ENCODE measurements at regions of chr1 and their contacts with region 1.

Region 1: GRCh38 chr1:235056937-235057336 is 71.7 kb downstream of the TOMM20 start:
- DNase-seq: no peak
- ATAC-seq: no peak
- H3K4me3 ChIP-seq: no peak overlapping the region
- H3K27ac ChIP-seq: no peak overlapping the region
- H3K4me1 ChIP-seq: peaks cover under 1% of the 10 kb centered on the region
- H3K27me3 ChIP-seq: no peaks in the 10 kb centered on the region
- CTCF ChIP-seq: no peak
- POLR2A ChIP-seq: no peak
- RAD21 ChIP-seq: no peak

Region 2: DNA sequence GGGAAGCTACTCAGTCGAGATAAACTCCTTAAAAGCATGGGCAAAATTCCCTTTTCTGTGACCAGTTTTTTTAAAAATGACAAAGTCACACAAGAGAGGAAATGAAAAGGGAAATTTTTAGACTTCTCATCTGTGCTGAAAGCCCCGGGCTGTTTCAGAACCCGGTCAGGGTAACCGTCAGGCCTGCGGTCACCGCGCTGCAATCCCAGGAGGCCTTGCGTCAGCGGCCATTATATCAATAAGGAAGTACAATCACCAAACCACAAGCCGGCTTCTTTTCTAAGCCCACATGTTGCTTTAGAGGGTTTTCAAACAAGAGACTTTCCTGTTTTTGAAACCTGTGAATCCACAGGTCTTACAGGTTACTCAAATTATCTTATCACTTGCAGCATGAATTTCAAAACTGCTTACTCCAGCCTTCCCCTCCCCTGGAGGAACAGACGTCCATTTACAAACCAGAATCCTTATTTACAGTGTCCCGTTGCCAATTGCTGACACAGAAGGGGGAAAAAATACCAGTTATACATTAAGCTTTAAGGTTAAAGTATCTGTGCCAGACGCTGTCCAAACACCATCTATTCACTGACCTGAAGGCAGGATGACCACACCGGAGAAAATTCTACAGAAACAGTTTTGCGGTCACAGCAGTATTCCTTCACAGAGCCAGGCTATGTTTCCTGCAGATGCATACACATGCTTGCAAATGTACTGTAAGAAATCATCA is 93.6 kb before region 1 on chr1:
- CTCF ChIA-PET with region 1: no interaction called
- POLR2A ChIA-PET with region 1: no interaction called
- dilution Hi-C with region 1: no loop called
- in situ Hi-C with region 1: no loop called
- intact Hi-C with region 1: no loop called
- DNase-seq: peak; percentile 95
- ATAC-seq: peak; percentile 33
- H3K4me3 ChIP-seq: no peak overlapping the region
- H3K27ac ChIP-seq: peak overlapping the region; percentile 90
- H3K4me1 ChIP-seq: peaks cover 21% of the 10 kb centered on the region
- H3K27me3 ChIP-seq: no peaks in the 10 kb centered on the region
- CTCF ChIP-seq: no peak
- POLR2A ChIP-seq: no peak
- RAD21 ChIP-seq: no peak; the same call in 1 of the 2 replicates

Region 3: GRCh38 chr1:235018161-235018560 is 38.8 kb before region 1 on chr1:
- CTCF ChIA-PET with region 1: no interaction called
- POLR2A ChIA-PET with region 1: no interaction called
- dilution Hi-C with region 1: no loop called
- in situ Hi-C with region 1: loop called (anchors 5 kb)
- intact Hi-C with region 1: no loop called
- DNase-seq: peak; percentile 98
- ATAC-seq: peak; percentile 93
- H3K4me3 ChIP-seq: no peak overlapping the region
- H3K27ac ChIP-seq: peak overlapping the region; percentile 45
- H3K4me1 ChIP-seq: peaks cover 3% of the 10 kb centered on the region
- H3K27me3 ChIP-seq: no peaks in the 10 kb centered on the region
- CTCF ChIP-seq: no peak
- POLR2A ChIP-seq: no peak
- RAD21 ChIP-seq: peak; percentile 20

Measured in IMR-90 (cell line).